CD4-positive, alpha-beta T cell (primary cell): ENCODE measurements at regions of chr19 and their contacts with region 1.

Region 1: DNA sequence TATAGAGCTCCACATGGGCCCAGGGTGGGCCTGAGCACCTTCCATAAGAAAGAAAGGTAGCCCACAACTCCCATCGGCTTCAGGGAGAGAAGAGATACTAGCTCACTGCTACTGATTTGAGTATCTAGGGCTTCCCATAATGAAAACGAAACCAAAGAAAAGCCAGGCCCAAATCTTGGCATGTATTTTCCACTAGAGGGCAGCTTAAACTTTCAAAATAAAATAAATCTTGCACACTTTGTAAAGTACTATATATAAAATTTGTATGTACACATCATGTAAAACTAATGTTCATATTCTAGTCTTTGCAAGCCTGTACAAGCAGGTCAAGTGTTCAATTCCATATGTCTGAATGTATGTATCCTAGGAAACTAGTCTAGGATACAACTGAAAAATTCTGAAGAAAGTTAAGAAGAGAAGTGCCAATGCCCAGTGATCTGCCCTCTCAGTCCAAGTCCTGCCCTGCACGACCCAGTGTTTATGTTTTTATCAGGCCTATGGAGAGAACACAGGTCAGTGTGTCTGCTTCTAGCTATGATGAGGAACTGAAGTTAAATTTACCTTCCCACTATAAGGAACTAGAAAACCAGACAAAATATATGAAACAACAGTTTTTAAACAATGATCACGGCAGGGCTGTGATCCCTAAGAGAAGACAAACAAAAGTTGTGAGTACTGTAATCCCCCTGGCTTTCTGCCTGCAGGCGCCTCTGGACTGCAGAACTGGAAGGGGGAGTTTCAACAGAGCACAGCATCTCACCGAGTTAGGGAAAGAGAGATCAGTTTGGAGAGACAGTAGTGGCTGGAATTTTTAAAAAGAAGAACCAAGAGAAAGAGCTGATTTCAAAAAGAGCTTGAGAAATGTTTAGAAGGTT is 475.7 kb downstream of the UQCRFS1 start:
- DNase-seq: peak in 3 of 14 experiments; percentile 30 to 36 (median 35)
- ATAC-seq: no peak
- H3K4me3 ChIP-seq: no peak overlapping the region
- H3K4me3 Mint-ChIP-seq: no peak overlapping the region
- H3K27ac ChIP-seq: no peak overlapping the region
- H3K27ac Mint-ChIP-seq: no peak overlapping the region
- H3K4me1 ChIP-seq: peaks cover 5% of the 10 kb centered on the region
- H3K4me1 Mint-ChIP-seq: peaks cover 4% of the 10 kb centered on the region
- H3K27me3 ChIP-seq: no peaks in the 10 kb centered on the region
- H3K27me3 Mint-ChIP-seq: no peaks in the 10 kb centered on the region
- CTCF ChIP-seq: no peak

Region 2: GRCh38 chr19:28878862-28879566 is 141.8 kb after region 1 on chr19:
- CTCF ChIA-PET with region 1: no interaction called
- POLR2A ChIA-PET with region 1: no interaction called
- intact Hi-C with region 1: loop called in 1 of 2 experiments (anchors 5 kb)
- DNase-seq: peak; percentile 8 to 70 (median 39)
- ATAC-seq: no peak
- H3K4me3 ChIP-seq: no peak overlapping the region
- H3K4me3 Mint-ChIP-seq: no peak overlapping the region
- H3K27ac ChIP-seq: no peak overlapping the region
- H3K27ac Mint-ChIP-seq: no peak overlapping the region
- H3K4me1 ChIP-seq: no peaks in the 10 kb centered on the region
- H3K4me1 Mint-ChIP-seq: no peaks in the 10 kb centered on the region
- H3K27me3 ChIP-seq: no peaks in the 10 kb centered on the region
- H3K27me3 Mint-ChIP-seq: peaks cover 15% of the 10 kb centered on the region
- CTCF ChIP-seq: peak; percentile 61

Region 3: DNA sequence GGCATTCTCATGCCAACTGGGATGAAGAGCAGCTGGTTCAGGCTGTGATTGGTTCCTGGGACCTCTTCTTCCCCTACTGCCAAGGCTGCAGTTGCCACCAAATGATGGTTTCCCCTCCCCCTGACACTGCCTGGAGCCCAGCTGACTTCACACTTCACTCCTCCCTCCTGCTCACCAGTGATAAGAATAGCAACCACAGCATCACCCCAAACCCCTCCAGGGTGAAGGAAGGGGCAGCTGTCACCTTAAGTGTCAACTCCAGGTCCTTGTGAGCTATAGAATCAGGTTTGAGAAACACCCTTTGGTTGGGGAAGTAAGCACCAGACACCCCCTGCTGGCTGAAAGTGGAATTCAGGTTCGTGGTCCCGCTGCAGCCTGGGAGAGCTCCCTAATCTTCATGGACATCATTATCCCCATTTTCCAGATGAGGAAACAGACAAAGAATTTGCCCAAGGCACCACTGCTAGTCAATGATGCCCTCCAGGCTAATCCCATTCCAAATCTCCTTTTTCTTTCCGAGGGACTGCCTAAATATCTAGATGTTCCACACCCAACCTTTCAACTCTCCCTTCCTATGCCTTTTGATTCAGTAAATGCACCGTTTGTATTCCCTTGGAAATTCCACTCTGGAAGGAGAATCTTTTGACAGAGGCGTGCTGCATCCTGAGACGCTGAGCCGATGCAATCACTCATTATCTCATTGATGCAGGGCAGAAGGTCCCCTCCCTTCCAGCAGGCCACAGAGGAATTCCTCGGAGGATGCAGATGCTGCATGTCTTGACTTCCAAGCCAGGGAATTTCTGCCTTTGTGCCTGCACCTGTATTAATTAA is 526.3 kb after region 1 on chr19:
- CTCF ChIA-PET with region 1: no interaction called
- POLR2A ChIA-PET with region 1: no interaction called
- intact Hi-C with region 1: loop called (anchors 2 to 5 kb)
- DNase-seq: peak; percentile 13 to 67 (median 44)
- ATAC-seq: peak; percentile 41
- H3K4me3 ChIP-seq: no peak overlapping the region
- H3K4me3 Mint-ChIP-seq: no peak overlapping the region
- H3K27ac ChIP-seq: no peak overlapping the region
- H3K27ac Mint-ChIP-seq: no peak overlapping the region
- H3K4me1 ChIP-seq: no peaks in the 10 kb centered on the region
- H3K4me1 Mint-ChIP-seq: no peaks in the 10 kb centered on the region
- H3K27me3 ChIP-seq: peaks cover 0 to 3% of the 10 kb centered on the region in 2 experiments
- H3K27me3 Mint-ChIP-seq: peaks cover 36% of the 10 kb centered on the region
- CTCF ChIP-seq: peak; percentile 79

Region 4: DNA sequence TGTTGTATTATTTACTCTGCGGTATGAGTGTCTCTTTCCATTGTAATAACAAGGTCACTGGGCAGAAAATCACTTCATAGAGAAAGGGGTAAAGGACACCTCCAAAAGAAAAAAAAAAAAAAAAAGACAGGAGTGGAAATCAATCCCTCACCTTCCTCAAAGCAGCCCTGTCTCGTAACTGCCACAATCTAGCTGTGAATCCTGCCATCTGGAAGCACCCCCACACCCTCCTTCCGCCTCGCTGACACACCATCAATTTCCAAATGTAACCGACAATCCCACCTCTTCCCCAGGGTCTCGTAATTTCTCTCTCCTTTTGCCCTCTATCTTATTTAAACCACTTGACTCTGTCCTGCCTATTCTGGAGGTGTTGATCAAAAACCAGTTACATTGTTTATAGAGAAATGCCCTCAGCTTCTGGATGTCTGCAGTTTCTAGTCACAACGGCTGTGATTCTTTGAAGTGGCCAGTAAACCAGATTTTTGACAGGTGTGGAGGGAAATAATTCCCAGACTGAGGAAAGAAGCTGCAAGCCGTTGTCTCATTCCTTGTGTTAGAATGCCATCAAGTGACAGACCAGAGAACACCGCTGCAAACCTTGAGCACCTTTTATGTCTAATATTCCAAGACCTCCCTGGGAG is 859.7 kb after region 1 on chr19:
- CTCF ChIA-PET with region 1: no interaction called
- POLR2A ChIA-PET with region 1: no interaction called
- intact Hi-C with region 1: loop called in 1 of 2 experiments (anchors 10 kb)
- DNase-seq: peak in 2 of 14 experiments; percentile 4 to 14
- ATAC-seq: no peak
- H3K4me3 ChIP-seq: no peak overlapping the region
- H3K4me3 Mint-ChIP-seq: no peak overlapping the region
- H3K27ac ChIP-seq: no peak overlapping the region
- H3K27ac Mint-ChIP-seq: no peak overlapping the region
- H3K4me1 ChIP-seq: no peaks in the 10 kb centered on the region
- H3K4me1 Mint-ChIP-seq: no peaks in the 10 kb centered on the region
- H3K27me3 ChIP-seq: peaks cover 3 to 10% of the 10 kb centered on the region in 2 experiments
- H3K27me3 Mint-ChIP-seq: peaks cover 33% of the 10 kb centered on the region
- CTCF ChIP-seq: peak; percentile 36

Region 5: GRCh38 chr19:30360376-30361106 is 1623.3 kb after region 1 on chr19:
- CTCF ChIA-PET with region 1: no interaction called
- POLR2A ChIA-PET with region 1: no interaction called
- intact Hi-C with region 1: no loop called
- DNase-seq: no peak
- ATAC-seq: no peak
- H3K4me3 ChIP-seq: no peak overlapping the region
- H3K4me3 Mint-ChIP-seq: no peak overlapping the region
- H3K27ac ChIP-seq: no peak overlapping the region
- H3K27ac Mint-ChIP-seq: no peak overlapping the region
- H3K4me1 ChIP-seq: no peaks in the 10 kb centered on the region
- H3K4me1 Mint-ChIP-seq: no peaks in the 10 kb centered on the region
- H3K27me3 ChIP-seq: peaks cover 3 to 21% of the 10 kb centered on the region in 2 experiments
- H3K27me3 Mint-ChIP-seq: peaks cover 30% of the 10 kb centered on the region
- CTCF ChIP-seq: no peak